Pancreas (tissue), 10 donors: ENCODE measurements at regions of chr17 and their contacts with region 1.

Region 1: GRCh38 chr17:48148854-48149786 is 41.6 kb downstream of the SNX11 start:
- DNase-seq: no peak
- ATAC-seq: no peak
- H3K4me3 ChIP-seq: no peak overlapping the region
- H3K27ac ChIP-seq: no peak overlapping the region
- H3K4me1 ChIP-seq: peaks cover 0 to 8% (median 4%) of the 10 kb centered on the region in 3 donors
- H3K27me3 ChIP-seq: no peaks in the 10 kb centered on the region
- CTCF ChIP-seq: no peak

Region 2: GRCh38 chr17:47905221-47905781 is 243.8 kb before region 1 on chr17:
- intact Hi-C with region 1: no loop called
- DNase-seq: peak in 5 of 6 donors; percentile 39 to 56 (median 50)
- ATAC-seq: peak; percentile 74 to 94 (median 82)
- H3K4me3 ChIP-seq: no peak overlapping the region
- H3K27ac ChIP-seq: peak overlapping the region; percentile 20 to 46 (median 36)
- H3K4me1 ChIP-seq: peaks cover 5 to 10% (median 5%) of the 10 kb centered on the region in 3 donors
- H3K27me3 ChIP-seq: no peaks in the 10 kb centered on the region
- CTCF ChIP-seq: no peak

Region 3: DNA sequence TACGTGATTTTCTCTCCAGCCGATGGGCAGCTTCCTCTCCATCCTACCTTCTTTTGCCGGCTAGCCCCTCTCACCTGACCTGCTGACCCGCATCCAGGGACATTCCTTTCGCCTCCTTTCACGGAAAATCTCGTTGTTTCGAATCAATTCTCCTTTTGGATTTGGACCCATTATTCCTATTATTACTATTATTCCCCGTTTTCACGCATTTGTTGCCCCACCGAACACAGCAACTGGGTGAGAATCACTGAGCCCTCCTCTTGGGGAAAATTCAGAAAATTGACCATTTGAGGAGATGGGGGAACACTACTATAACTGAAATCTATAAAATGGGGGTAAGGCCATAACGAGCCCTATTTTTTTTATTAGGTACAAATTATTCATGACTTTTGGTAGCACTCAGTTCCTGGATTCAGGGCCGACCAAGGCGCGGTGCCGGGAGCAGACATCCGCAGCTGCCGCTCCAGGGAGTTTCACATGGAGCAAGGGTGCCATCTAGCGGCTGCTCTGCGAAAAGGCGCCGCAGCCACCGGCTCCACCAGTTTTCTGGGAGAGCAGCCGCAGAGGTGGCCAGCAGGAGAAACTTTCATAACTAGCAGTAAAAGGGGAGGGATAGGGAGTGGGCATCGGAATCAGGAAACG is 469.3 kb after region 1 on chr17:
- intact Hi-C with region 1: loop called in 1 of 3 experiments (anchors 10 kb)
- DNase-seq: peak; percentile 75 to 98 (median 92)
- ATAC-seq: peak; percentile 94 to 99 (median 97)
- H3K4me3 ChIP-seq: no peak overlapping the region
- H3K27ac ChIP-seq: no peak overlapping the region
- H3K4me1 ChIP-seq: no peaks in the 10 kb centered on the region
- H3K27me3 ChIP-seq: peaks cover 9 to 71% (median 24%) of the 10 kb centered on the region in 4 donors
- CTCF ChIP-seq: peak; percentile 92 to 97 (median 97)